ENCODE measurements at regions of chr4 and their contacts with region 1.

Region 1: DNA sequence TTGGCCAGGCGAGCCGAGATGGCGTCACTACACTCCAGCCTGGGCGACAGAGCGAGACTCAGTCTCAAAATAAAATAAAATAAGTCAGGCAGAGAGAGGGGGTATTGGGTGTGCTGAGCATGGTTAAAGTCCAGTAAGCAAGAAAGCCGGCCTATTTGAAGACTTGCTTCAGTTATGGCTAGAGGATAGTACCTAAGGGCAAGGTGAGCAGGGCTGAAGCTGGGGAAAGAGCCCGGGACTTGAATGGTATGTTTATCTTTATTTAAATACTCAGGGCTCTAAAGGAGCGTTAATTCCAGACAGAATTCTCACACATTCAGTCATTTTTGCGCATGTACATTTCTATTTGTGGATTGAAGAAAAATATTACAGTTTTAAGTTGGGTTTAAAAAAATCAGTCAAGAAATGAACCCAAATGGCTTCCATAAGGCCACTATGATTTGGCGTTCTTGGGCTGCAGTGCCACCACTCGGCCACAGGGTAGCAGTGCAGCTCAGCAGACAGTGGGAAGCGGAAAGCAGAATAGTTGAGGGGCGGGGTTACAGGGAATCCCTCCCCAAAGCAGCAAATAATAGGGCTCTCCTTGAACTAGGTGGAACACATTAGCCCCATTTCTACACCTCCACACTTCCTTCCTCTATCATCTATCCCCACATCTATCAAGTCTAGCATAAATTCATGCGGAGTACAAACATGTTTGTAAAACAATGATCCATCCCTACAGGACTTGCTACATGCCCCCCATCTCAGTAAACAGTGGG is 37.2 kb upstream of the SH3D19 start:
- DNase-seq: peak; percentile 82
- ATAC-seq: peak; percentile 99

Region 2: DNA sequence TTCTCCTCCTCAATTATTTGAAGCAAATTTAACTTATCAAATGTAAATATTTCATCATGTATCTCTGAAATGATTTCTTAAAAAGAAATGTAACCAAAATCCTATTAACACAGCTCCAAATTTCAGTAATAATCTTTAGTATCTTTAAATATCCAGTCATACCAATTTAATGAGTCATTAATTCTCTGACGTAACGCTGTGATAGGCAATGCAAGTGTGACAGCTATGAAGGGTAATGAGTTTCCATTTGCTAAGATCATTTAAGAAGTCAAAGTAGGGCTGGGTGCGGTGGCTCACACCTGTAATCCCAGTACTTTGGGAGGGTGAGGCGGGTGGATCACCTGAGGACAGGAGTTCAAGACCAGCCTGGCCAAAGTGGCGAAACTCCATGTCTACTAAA is 247.6 kb before region 1 on chr4:
- intact Hi-C with region 1: loop called (anchors 5 kb)
- DNase-seq: no peak
- ATAC-seq: no peak

Region 3: DNA sequence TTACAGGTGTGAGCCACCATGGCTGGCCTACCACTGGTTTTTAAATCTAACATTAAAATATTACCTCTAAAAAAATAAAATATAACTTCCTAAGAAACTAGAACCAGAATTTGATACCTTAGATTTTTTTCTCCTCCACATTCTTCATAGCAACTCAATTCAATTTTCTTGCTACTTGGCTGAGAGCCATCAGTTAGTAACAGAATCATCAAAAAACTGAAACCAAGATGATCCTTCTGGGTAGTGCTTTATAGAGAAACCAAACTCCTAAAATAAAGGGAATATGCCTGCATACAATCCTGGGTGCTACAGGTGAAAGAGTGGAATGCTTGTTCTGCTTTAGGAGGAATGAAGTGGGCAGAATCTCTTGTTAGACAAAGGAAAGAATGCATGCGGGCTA is 198.7 kb before region 1 on chr4:
- intact Hi-C with region 1: no loop called
- DNase-seq: no peak
- ATAC-seq: no peak

Region 4: GRCh38 chr4:151291485-151291884 is 71.1 kb before region 1 on chr4:
- intact Hi-C with region 1: no loop called
- DNase-seq: no peak
- ATAC-seq: no peak

Region 5: DNA sequence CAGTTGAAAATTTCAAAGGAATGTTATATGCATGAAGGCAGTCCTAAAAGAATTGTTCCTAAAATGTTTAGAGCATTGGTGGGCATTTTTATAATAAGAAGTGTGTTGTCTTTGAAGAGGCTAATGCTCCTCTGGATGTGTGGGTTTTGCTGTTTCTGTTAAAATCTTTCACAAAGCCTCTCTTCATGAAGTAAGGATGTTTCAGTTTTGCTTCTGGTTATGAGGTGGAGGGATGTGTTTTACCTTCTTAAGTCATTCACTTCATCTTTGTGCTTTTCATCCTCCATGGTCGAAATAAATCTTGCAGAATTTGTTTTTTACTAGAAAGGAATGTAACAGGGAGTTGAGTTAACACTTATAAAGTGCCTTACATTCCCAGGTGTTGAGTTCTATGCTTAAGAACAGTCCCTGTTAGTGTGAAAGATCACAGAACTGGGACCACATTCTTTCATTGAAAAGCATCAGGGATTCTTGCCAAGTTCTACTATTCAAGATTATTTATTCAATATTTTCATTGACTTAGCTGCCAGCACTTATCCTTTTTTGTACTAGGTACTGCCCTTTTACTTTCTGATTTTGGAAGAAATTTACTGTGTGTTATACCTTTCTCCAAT is 67.5 kb after region 1 on chr4:
- intact Hi-C with region 1: no loop called
- DNase-seq: no peak
- ATAC-seq: no peak

Measured in Right ventricle myocardium superior (tissue), 1 donor.